ENCODE measurements at regions of chr2 and their contacts with region 1.

Region 1: DNA sequence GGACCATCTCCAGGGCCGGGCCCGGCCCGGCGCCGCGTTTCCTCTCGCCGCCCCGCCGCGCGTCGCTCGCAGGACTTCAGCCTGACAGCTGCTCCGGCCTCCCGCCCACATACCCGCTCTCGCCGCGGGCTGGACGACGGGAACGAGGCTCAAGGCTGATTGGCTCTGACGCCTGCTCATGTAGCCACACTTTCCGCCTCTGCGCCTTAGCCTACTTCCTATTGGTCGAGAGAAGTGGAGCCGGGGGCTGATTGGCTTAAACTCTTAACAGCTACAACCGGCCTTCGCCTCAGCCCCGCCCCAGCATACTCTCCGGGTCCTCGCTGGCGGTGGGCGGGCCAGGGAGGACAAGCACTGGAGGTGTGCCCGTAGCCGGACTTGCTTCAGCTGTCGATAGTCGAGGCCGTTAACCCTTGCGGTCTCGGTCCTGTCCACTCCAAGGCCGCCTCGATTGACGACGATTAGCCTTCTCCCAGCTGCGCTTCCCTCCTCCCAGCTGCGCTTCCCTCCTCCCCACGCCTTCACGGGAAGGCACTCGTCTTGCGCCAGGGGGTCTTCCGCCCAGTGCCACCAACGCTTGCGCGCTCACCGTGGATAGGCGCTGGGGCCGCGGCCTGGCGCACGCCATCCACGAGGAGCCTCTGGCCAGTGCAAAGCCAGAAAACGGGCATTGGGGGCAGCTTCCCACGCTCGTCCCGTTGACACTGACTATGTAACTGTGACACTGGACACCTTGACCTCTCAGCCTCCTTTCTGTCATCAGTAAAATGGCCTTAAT is at the start of gene PRADC1:
- DNase-seq: peak; percentile 99 to 100 (median 100)
- H3K4me3 ChIP-seq: peak within 1 kb of the TSS; percentile 55 to 99 (median 90)
- H3K27ac ChIP-seq: peak within 1 kb of the TSS; percentile 74 to 100 (median 98)
- H3K27me3 ChIP-seq: no peaks in the 10 kb centered on the region
- CTCF ChIP-seq: peak in 9 of 56 donors; percentile 4 to 37 (median 26)
- total RNA-seq, gene PRADC1: 12.9 to 36.2 (median 21.9) TPM

Region 2: DNA sequence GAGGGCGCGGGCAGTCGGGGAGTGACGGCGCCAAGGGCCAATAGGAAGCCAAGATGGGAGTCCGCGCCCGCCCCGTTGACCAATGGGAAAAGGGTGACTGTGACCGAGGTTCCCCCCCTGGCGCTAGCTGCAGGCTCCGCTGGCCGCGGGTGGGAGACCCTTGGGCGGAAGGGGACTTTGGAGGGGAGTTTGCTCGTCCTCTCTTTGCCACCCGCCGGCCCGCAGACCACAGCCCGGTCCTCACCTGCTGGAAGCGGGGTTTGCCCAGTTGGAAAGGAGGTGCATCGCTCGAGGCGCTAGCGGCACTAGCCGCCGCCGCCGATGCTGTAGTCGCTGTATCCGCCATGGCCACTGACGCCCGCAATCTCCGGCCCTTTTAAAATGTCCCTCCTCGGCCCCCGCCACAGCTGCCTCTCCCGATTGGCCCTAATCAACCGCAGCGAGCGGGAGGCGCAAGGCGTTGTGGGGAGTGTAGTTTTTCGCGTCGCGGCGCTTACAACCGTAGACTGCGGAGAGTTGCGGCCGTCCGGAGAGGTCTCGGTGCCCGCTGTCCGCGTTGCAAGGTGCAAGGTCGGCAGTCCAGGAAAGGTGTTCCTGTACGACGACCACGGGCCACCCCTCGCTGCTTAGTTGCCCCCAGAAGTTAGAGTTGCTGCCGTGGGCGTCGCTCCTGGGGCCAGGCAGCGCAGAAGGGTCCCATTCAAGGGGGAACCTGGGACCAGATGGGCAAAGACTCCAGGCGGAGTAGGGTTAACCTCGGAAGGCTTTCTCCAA is 161.8 kb before region 1 on chr2 and contains the start of gene SFXN5:
- intact Hi-C with region 1: loop called in 1 of 2 experiments (anchors 5 kb)
- DNase-seq: peak; percentile 95 to 99 (median 98)
- H3K4me3 ChIP-seq: peak within 1 kb of the TSS; percentile 69 to 100 (median 93)
- H3K27ac ChIP-seq: peak within 1 kb of the TSS; percentile 72 to 99 (median 97)
- H3K27me3 ChIP-seq: no peaks in the 10 kb centered on the region
- CTCF ChIP-seq: peak in 34 of 56 donors; percentile 6 to 61 (median 33)
- total RNA-seq, gene SFXN5: 82.7 to 370 (median 148) TPM

Region 3: DNA sequence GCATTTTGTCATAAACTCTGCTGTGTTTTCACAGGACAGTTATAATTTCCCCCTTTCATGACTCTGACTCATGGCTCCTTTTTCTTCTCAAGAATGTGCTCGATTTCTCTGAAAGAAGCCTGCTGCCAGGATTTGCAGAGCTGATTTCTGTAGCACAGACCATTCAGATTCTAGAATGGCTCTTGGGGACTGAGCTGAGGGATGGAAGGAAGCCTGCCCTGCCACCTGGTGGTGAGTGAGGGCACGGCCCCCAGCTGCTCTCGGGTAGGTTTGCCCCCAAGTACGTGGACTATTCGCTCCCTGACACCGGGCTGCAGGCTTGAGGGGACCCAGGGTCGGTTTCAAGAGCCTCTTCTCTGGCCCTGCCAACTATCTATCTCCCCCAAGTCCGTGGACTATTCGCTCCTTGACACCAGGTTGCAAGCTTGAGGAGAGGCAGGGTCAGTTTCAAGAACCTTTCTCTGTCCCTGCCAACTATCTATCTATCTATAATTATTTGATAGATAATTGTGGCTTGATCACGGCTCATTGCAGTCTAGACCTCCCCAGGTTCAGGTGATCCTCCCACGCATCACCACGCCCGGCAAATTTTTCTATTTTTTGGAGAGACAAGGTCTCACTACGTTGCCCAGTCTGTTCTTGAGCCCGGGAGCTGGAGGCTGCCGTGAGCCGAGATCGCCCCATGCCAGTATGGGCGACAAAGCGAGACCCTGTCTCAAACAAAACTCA is 20.7 kb before region 1 on chr2:
- intact Hi-C with region 1: loop called in 1 of 2 experiments (anchors 1 kb)
- DNase-seq: peak; percentile 47 to 78 (median 68)
- H3K4me3 ChIP-seq: peak overlapping the region in 2 of 59 donors; percentile 17 to 32
- H3K27ac ChIP-seq: peak overlapping the region in 35 of 59 donors; percentile 3 to 84 (median 47)
- H3K27me3 ChIP-seq: no peaks in the 10 kb centered on the region
- CTCF ChIP-seq: peak; percentile 71 to 95 (median 90)

Region 4: DNA sequence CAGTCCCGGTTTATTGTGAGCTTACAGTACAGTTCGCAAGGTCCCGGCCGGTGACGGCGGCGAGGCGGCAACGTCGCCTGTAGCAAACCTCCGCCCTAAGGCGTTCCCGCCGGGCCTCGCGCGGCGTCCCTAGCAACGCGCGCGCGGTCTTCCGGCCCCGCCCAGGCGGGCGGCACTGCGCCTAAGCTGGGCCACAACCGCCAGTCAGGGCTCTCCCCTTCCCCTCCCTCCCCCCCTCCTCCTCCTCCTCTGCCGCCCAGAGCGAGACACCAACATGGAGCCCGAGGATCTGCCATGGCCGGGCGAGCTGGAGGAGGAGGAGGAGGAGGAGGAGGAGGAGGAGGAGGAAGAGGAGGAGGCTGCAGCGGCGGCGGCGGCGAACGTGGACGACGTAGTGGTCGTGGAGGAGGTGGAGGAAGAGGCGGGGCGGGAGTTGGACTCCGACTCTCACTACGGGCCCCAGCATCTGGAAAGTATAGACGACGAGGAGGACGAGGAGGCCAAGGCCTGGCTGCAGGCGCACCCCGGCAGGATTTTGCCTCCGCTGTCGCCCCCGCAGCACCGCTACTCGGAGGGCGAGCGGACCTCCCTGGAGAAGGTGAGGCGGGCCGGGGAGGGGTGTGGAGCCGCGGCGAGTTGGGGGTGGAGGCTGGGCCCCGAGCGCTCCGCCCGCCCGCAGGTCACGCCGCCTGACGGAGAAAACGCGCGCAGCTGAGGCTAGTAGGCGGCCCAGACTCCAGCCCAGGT is 152.4 kb after region 1 on chr2 and contains the start of gene ALMS1:
- intact Hi-C with region 1: loop called in 1 of 2 experiments (anchors 1 kb)
- DNase-seq: peak; percentile 69 to 91 (median 84)
- H3K4me3 ChIP-seq: peak within 1 kb of the TSS; percentile 46 to 96 (median 83)
- H3K27ac ChIP-seq: peak within 1 kb of the TSS; percentile 38 to 96 (median 84)
- H3K27me3 ChIP-seq: no peaks in the 10 kb centered on the region
- CTCF ChIP-seq: peak in 37 of 56 donors; percentile 7 to 56 (median 28)
- total RNA-seq, gene ALMS1: 27.7 to 81.6 (median 46.9) TPM